GM12878 (cell line): ENCODE measurements at regions of chr12 and their contacts with region 1.

Region 1: DNA sequence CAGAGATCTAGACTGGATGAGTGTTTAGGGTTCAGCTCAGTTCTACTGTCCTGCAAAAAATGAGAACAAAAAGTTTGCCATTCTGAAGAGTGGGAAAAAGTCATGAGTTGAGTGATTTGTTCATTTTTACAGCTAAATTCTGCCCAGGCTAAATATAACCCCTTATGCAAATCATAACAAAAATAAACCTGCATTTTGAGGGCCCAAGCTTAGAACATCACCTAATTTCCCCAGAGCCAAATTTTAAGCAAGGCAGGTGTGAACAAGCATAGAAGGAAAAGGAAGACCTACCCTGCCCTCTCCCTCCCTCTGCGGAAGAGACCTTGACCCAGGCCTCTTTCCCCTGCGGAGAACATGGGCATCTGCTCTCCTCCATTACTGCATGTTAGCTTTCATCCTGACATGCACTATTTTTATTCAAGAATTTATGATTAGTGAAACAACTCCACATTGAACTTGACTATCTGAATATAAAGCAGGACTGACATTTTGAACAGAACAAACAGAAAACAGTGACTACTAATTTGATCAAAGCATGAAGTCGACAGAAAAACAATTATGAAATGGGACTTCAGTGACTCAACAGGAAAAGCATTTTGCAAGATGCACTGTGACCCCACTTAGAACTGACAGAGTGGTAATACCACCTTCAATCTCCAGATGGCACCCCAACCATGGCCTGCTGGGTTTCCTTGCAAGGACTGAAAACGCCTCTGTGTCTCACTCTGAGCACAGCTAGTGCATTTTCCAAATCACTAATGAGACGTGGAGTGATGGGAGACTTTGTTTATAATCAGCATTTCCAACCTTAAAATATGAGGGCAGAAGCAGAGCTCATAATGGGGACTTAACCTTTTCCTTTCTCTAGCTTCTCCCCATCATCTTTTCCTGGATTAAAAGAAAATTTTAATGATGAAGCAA is 30.9 kb upstream of the SELPLG start:
- DNase-seq: peak; percentile 91
- ATAC-seq: peak; percentile 92
- H3K4me3 ChIP-seq: peak overlapping the region; percentile 43
- H3K27ac ChIP-seq: peak overlapping the region; percentile 96
- H3K4me1 ChIP-seq: peaks cover 51% of the 10 kb centered on the region
- H3K27me3 ChIP-seq: no peaks in the 10 kb centered on the region
- CTCF ChIP-seq: peak; percentile 93 to 98 (median 97); a peak in 5 of 6 replicates
- EP300 ChIP-seq: peak; percentile 46 to 71; a peak in 3 of 4 replicates
- POLR2A ChIP-seq: peak; percentile 42; the same call in 1 of the 2 replicates
- RAD21 ChIP-seq: peak; percentile 100

Region 2: DNA sequence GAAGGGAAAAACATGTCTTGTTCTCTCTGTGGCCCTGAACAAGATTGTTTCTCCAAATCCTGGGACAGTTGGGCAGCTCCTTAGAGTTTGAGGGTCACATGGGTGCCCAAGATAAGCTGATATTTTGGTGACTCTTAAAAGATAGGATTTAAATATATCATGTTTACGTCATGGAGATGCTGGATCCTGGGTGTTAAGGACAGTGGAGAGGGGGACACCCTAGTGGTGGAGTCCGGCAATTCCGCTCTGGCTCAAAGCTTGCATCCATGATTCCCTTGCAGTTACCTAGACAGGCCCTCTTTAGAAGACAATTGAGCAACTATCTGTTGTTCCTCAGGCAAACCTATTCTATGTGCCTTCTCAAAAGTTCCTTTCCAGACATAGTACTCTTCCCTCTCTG is 427.3 kb before region 1 on chr12:
- CTCF ChIA-PET with region 1: no interaction called
- POLR2A ChIA-PET with region 1: no interaction called
- RAD21 ChIA-PET with region 1: no interaction called
- SMC1A ChIA-PET with region 1: no interaction called
- in situ Hi-C with region 1: no loop called
- intact Hi-C with region 1: no loop called
- DNase-seq: no peak
- ATAC-seq: no peak
- H3K4me3 ChIP-seq: no peak overlapping the region
- H3K27ac ChIP-seq: no peak overlapping the region
- H3K4me1 ChIP-seq: no peaks in the 10 kb centered on the region; the same call in 1 of the 2 replicates
- H3K27me3 ChIP-seq: no peaks in the 10 kb centered on the region; a peak in 1 of 4 replicates
- CTCF ChIP-seq: peak in 2 of 3 experiments; percentile 16 to 28; a peak in 2 of 6 replicates
- EP300 ChIP-seq: no peak
- POLR2A ChIP-seq: no peak
- RAD21 ChIP-seq: no peak

Region 3: GRCh38 chr12:108562348-108563135 is 102.1 kb before region 1 on chr12 and contains the start of gene ISCU:
- CTCF ChIA-PET with region 1: interaction called, 171 read pairs
- POLR2A ChIA-PET with region 1: interaction called, 12 read pairs
- RAD21 ChIA-PET with region 1: interaction called, 167 read pairs
- SMC1A ChIA-PET with region 1: interaction called, 150 read pairs
- in situ Hi-C with region 1: no loop called
- intact Hi-C with region 1: loop called (anchors 1 kb)
- DNase-seq: peak; percentile 90
- ATAC-seq: peak; percentile 66
- H3K4me3 ChIP-seq: peak within 1 kb of the TSS; percentile 89
- H3K27ac ChIP-seq: peak within 1 kb of the TSS; percentile 100
- H3K4me1 ChIP-seq: peaks cover 42% of the 10 kb centered on the region
- H3K27me3 ChIP-seq: no peaks in the 10 kb centered on the region
- CTCF ChIP-seq: no peak
- EP300 ChIP-seq: no peak
- POLR2A ChIP-seq: peak; percentile 94
- RAD21 ChIP-seq: no peak
- polyA plus RNA-seq, gene ISCU: 32.8 to 66.1 TPM

Region 4: GRCh38 chr12:108640802-108641445 is 23.7 kb before region 1 on chr12:
- CTCF ChIA-PET with region 1: interaction called, 193 read pairs
- POLR2A ChIA-PET with region 1: interaction called, 26 read pairs
- RAD21 ChIA-PET with region 1: interaction called, 221 read pairs
- SMC1A ChIA-PET with region 1: interaction called, 219 read pairs
- in situ Hi-C with region 1: no loop called
- intact Hi-C with region 1: loop called (anchors 2 kb)
- DNase-seq: no peak
- ATAC-seq: peak; percentile 4
- H3K4me3 ChIP-seq: peak overlapping the region; percentile 22; the same call in 1 of the 2 replicates
- H3K27ac ChIP-seq: peak overlapping the region; percentile 45
- H3K4me1 ChIP-seq: peaks cover 59% of the 10 kb centered on the region
- H3K27me3 ChIP-seq: no peaks in the 10 kb centered on the region
- CTCF ChIP-seq: no peak
- EP300 ChIP-seq: no peak
- POLR2A ChIP-seq: no peak
- RAD21 ChIP-seq: no peak

Region 5: GRCh38 chr12:108691175-108691997 is 26.8 kb after region 1 on chr12:
- CTCF ChIA-PET with region 1: interaction called, 48 read pairs
- POLR2A ChIA-PET with region 1: interaction called, 19 read pairs
- RAD21 ChIA-PET with region 1: interaction called, 69 read pairs
- SMC1A ChIA-PET with region 1: interaction called, 215 read pairs
- in situ Hi-C with region 1: no loop called
- intact Hi-C with region 1: no loop called
- DNase-seq: peak; percentile 63
- ATAC-seq: peak; percentile 90
- H3K4me3 ChIP-seq: peak overlapping the region; percentile 62; the same call in 1 of the 2 replicates
- H3K27ac ChIP-seq: peak overlapping the region; percentile 97
- H3K4me1 ChIP-seq: peaks cover 66% of the 10 kb centered on the region
- H3K27me3 ChIP-seq: no peaks in the 10 kb centered on the region
- CTCF ChIP-seq: peak in 2 of 3 experiments; percentile 24 to 37; a peak in 2 of 6 replicates
- EP300 ChIP-seq: 0 out of 4 replicates have a peak, but pooled peaks of 1 of the 2 experiments have one; percentile 29
- POLR2A ChIP-seq: peak; percentile 27; the same call in 1 of the 2 replicates
- RAD21 ChIP-seq: no peak

Region 6: DNA sequence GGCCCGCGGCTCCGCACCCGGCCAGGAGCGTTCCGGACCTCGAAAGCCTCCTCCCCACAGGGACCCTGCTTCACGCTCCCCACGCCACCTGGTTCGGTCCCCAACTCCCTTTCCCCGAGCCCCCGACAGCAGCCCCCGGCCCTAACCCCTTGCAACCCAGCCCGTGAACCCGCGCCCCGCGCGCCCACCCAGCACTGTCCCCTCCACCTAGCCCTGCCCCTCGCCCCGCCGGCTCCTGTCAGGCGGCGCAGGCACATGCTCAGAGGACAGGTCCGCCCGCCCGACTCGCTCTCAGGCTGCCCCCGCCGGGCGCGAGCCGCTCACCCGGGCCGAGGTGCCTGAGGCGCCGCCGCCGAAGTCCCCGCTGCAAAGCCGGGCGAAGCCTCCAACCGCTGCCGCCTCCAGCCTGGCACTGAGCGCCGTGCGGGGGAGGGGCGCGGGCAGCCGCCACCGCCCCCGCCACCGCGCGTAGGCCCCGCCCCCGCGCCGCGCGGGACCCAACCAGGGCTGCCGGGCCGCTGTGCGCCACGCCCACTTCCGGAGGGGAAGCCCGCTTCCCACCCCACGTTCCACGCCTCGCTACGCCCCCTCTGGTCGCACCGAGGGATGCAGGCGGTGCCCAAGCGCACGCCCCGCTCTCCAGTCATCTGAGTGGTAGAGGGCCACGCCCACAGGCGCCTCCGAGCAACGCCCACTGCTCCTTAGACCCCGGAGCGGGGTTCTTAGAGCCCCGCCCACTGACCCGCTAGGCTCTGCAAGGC is 66.7 kb after region 1 on chr12 and contains the start of gene CORO1C:
- CTCF ChIA-PET with region 1: interaction called, 15 read pairs
- POLR2A ChIA-PET with region 1: interaction called, 9 read pairs
- RAD21 ChIA-PET with region 1: interaction called, 20 read pairs
- SMC1A ChIA-PET with region 1: interaction called, 61 read pairs
- in situ Hi-C with region 1: no loop called
- intact Hi-C with region 1: loop called (anchors 1 kb)
- DNase-seq: peak; percentile 90
- ATAC-seq: peak; percentile 80
- H3K4me3 ChIP-seq: peak within 1 kb of the TSS; percentile 88
- H3K27ac ChIP-seq: peak within 1 kb of the TSS; percentile 79
- H3K4me1 ChIP-seq: peaks cover 13% of the 10 kb centered on the region
- H3K27me3 ChIP-seq: no peaks in the 10 kb centered on the region
- CTCF ChIP-seq: peak; percentile 80 to 88 (median 86)
- EP300 ChIP-seq: no peak; a peak in 1 of 4 replicates
- POLR2A ChIP-seq: peak; percentile 86
- RAD21 ChIP-seq: peak; percentile 58
- polyA plus RNA-seq, gene CORO1C: 52.7 to 52.9 TPM

Region 7: DNA sequence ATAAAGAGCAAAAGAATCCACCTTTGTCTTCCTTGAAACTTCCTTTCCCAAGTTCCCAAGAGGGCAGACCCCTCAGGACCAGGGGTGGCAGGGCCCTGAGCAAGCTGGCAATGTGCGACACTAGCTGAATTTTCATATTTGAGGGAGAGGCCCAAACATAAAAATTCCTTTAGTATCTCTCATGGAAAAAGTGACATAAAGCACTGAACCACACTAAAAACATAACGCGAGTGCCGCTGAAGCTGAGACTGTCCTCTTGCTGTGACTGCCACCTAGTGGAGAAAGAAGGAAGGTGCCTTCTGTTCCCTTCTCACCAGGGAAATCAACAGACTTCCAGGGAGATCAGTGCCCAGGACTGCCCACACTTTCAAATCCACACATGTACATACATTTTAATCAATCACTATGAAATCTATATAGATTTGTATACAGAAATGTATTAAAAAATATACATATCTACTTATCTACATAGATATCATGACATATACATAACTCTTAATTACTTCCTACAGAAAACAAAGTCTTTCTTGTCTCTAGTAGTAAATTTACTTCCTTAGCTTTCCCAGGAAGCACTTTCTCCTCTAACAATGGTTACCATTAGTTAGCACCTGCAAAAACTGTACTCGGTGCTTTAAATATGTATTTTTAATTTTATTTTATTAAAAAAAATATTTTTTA is 139.0 kb after region 1 on chr12:
- CTCF ChIA-PET with region 1: interaction called, 252 read pairs
- POLR2A ChIA-PET with region 1: interaction called, 13 read pairs
- RAD21 ChIA-PET with region 1: interaction called, 182 read pairs
- SMC1A ChIA-PET with region 1: interaction called, 293 read pairs
- in situ Hi-C with region 1: loop called (anchors 5 kb)
- intact Hi-C with region 1: loop called (anchors 1 kb)
- DNase-seq: peak; percentile 57
- ATAC-seq: peak; percentile 90
- H3K4me3 ChIP-seq: no peak overlapping the region
- H3K27ac ChIP-seq: peak overlapping the region; percentile 41
- H3K4me1 ChIP-seq: peaks cover 9% of the 10 kb centered on the region; the same call in 1 of the 2 replicates
- H3K27me3 ChIP-seq: no peaks in the 10 kb centered on the region
- CTCF ChIP-seq: peak; percentile 90 to 94 (median 91)
- EP300 ChIP-seq: no peak
- POLR2A ChIP-seq: no peak
- RAD21 ChIP-seq: peak; percentile 98

Region 8: GRCh38 chr12:108856428-108857157 is 192.0 kb after region 1 on chr12:
- CTCF ChIA-PET with region 1: interaction called, 60 read pairs
- POLR2A ChIA-PET with region 1: interaction called, 9 read pairs
- RAD21 ChIA-PET with region 1: interaction called, 45 read pairs
- SMC1A ChIA-PET with region 1: interaction called, 87 read pairs
- in situ Hi-C with region 1: no loop called
- intact Hi-C with region 1: loop called (anchors 1 kb)
- DNase-seq: no peak
- ATAC-seq: peak; percentile 37
- H3K4me3 ChIP-seq: peak overlapping the region; percentile 93
- H3K27ac ChIP-seq: peak overlapping the region; percentile 79
- H3K4me1 ChIP-seq: peaks cover 52% of the 10 kb centered on the region
- H3K27me3 ChIP-seq: no peaks in the 10 kb centered on the region
- CTCF ChIP-seq: peak in 1 of 3 experiments; percentile 5; a peak in 1 of 6 replicates
- EP300 ChIP-seq: peak; percentile 64 to 77; a peak in 3 of 4 replicates
- POLR2A ChIP-seq: no peak
- RAD21 ChIP-seq: no peak